ENCODE measurements at regions of chr15 and their contacts with region 1.

Region 1: GRCh38 chr15:74489518-74490338 is 28.8 kb upstream of the UBL7 start:
- DNase-seq: peak in 1 of 2 donors; percentile 18
- H3K4me3 ChIP-seq: no peak overlapping the region
- CTCF ChIP-seq: no peak
- POLR2A ChIP-seq: no peak

Region 2: DNA sequence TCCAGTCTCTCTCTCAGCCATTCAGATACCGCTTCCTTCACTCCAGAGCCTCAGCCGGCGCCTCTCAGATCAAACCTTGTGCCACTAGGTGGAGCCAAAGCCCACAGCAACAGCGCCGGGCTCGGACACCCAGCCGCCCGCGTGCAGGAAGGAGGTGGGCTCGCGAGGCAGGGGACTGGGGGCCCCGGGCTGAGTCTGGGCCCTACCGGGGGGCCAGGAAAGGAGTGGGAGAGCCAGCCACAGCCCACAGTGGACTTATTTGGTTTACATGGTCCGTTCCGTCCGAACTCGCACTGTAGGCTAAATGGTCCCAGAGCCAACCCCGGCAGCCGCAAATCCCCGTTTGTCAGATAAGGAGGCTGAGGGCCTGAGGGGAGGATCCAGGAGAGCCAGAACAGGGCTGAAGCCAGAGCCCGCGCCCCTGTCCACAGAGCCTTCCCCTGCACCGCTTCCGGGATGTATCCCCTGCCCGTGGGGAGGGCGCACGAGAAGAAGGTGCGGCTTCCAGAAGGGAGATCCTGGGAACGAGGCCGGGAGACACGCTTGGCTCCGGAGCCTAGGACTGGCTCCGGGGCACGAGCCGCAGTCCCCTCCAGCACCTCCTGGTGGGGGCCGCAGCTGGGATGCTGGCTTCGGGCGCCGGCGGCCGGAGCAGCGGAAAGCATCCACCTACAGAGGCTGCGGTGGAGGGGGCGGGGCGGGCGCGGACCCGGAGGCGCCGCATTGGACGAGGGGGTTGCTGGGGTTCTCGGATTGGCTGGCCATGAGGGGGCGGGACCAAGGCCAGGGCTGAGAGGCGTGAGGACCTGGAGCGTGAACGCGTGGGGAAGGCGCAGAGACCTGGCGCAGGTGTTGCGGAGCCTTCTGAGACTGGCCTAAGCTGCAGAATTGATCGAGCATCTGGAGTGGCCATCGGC is 115.7 kb before region 1 on chr15:
- intact Hi-C with region 1: loop called (anchors 10 kb)
- DNase-seq: peak; percentile 91 to 99
- H3K4me3 ChIP-seq: peak overlapping the region; percentile 48
- CTCF ChIP-seq: no peak
- POLR2A ChIP-seq: no peak

Region 3: GRCh38 chr15:74422650-74423430 is 66.9 kb before region 1 on chr15:
- intact Hi-C with region 1: no loop called
- DNase-seq: no peak
- H3K4me3 ChIP-seq: no peak overlapping the region
- CTCF ChIP-seq: no peak
- POLR2A ChIP-seq: no peak

Region 4: GRCh38 chr15:74964794-74965193 is 475.1 kb after region 1 on chr15:
- intact Hi-C with region 1: no loop called
- DNase-seq: no peak
- H3K4me3 ChIP-seq: no peak overlapping the region
- CTCF ChIP-seq: no peak
- POLR2A ChIP-seq: no peak

Measured in lower leg skin (tissue), 4 donors.